CD8-positive, alpha-beta T cell (primary cell): ENCODE measurements at regions of chr17 and their contacts with region 1.

Region 1: DNA sequence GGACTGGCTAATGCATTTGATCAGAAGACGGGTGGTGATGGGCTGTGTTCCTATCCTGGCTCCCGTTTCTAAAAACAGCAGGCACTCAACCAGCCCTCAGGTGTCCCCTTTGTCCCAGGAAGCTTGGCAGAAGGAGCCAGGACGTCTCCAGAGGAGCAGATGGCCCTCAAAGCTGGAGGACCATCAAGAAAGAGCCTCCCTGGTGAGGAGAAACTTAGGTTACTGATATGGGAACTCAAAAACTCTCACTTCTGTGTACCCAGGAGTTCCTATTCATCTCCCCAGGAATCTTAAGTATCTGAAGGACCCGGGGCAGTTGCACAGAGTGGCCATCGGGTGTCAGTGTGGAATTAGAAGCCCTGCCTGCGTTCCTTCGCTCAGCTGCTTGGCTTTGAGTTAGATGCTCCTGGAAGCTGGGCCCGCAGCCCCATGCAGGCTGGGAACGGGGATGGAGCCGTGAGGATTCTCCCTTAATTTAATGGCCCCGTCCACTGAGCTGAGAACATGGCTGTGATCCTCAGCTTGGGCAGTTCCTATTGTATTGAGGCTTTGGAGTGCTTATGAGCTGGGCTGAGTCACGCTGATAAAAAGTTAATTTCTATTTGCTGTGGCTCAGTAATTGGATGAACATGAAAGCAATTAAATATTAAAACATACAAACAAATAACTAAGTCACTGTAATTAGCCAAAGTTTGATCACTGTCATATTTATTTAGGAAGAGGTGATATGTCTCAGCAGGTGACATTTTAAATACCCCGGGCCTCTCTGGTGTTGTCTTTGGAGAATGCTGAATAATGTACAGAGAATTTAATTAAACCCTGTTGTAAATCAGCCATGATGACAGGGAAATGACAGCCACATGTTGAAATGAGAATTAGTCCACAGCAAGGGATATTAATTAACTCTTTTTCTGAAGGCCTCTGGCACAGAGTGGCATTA is 402.1 kb downstream of the SEC14L1 start:
- DNase-seq: peak; percentile 32 to 78 (median 63)
- ATAC-seq: peak; percentile 83
- H3K4me3 ChIP-seq: no peak overlapping the region
- H3K4me3 Mint-ChIP-seq: no peak overlapping the region
- H3K27ac ChIP-seq: no peak overlapping the region
- H3K27ac Mint-ChIP-seq: no peak overlapping the region
- H3K4me1 ChIP-seq: no peaks in the 10 kb centered on the region
- H3K4me1 Mint-ChIP-seq: no peaks in the 10 kb centered on the region
- H3K27me3 ChIP-seq: no peaks in the 10 kb centered on the region
- H3K27me3 Mint-ChIP-seq: peaks cover 3% of the 10 kb centered on the region
- CTCF ChIP-seq: peak; percentile 84

Region 2: DNA sequence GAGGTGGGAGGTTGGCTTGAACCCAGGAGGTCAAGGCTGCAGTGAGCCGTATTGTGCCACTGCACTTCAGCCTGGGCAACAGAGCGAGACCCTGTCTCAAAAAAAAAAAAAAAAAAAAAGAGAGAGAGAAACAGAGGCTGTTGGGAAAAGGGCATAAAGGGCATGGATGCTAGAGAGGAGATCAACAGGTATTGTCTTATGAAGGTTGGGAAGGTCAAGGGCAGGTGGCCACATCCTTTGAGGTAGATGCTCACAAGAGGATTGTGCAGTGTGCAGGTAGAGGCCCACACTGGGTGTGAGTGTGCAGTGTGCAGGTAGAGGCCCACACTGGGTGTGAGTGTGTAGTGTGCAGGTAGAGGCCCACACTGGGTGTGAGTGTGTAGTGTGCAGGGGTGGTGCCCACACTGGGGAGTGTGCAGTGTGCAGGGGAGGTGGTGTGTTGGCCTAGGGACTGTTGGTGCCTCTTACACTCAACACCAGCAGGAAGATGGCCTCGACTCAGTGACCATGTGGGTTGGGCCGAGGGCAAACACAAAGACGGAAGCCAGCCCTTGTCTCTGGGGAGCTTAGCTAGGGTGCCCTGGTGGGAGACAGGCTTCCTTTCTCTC is 10.7 kb after region 1 on chr17:
- CTCF ChIA-PET with region 1: interaction called, 13 read pairs
- POLR2A ChIA-PET with region 1: no interaction called
- intact Hi-C with region 1: no loop called
- DNase-seq: no peak
- ATAC-seq: no peak
- H3K4me3 ChIP-seq: no peak overlapping the region
- H3K4me3 Mint-ChIP-seq: no peak overlapping the region
- H3K27ac ChIP-seq: no peak overlapping the region
- H3K27ac Mint-ChIP-seq: no peak overlapping the region
- H3K4me1 ChIP-seq: no peaks in the 10 kb centered on the region
- H3K4me1 Mint-ChIP-seq: no peaks in the 10 kb centered on the region
- H3K27me3 ChIP-seq: peaks cover 0 to 2% of the 10 kb centered on the region in 2 experiments
- H3K27me3 Mint-ChIP-seq: no peaks in the 10 kb centered on the region
- CTCF ChIP-seq: no peak

Region 3: GRCh38 chr17:77724876-77725615 is 182.2 kb after region 1 on chr17:
- CTCF ChIA-PET with region 1: no interaction called
- POLR2A ChIA-PET with region 1: no interaction called
- intact Hi-C with region 1: loop called in 1 of 2 experiments (anchors 5 kb)
- DNase-seq: peak in 1 of 9 experiments; percentile 29
- ATAC-seq: no peak
- H3K4me3 ChIP-seq: no peak overlapping the region
- H3K4me3 Mint-ChIP-seq: no peak overlapping the region
- H3K27ac ChIP-seq: no peak overlapping the region
- H3K27ac Mint-ChIP-seq: no peak overlapping the region
- H3K4me1 ChIP-seq: no peaks in the 10 kb centered on the region
- H3K4me1 Mint-ChIP-seq: peaks cover 3% of the 10 kb centered on the region
- H3K27me3 ChIP-seq: no peaks in the 10 kb centered on the region
- H3K27me3 Mint-ChIP-seq: peaks cover 3% of the 10 kb centered on the region
- CTCF ChIP-seq: no peak

Region 4: DNA sequence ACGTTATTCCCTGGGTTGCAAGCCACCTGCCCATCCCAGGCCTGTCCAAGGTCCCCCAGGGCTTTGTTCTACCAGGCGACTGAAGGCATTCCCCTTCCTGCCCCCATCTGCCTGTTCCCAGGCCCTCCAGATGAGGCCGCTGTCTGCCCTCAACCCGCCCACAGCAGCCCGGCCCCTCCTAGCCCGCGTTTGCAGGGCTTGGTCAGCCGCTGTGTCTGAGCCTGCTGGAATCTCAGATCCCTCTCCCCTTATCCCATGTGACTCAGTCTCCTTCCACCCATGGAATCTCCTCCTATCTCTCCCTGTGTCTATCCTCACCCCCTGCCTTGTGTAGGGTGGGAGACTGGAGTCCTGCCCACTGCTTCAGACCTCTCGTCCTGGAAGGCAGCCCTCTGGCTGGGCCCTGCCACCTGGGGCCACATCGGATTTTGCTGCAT is 229.7 kb after region 1 on chr17:
- CTCF ChIA-PET with region 1: interaction called, 10 read pairs
- POLR2A ChIA-PET with region 1: no interaction called
- intact Hi-C with region 1: loop called in 1 of 2 experiments (anchors 10 kb)
- DNase-seq: peak; percentile 46 to 82 (median 67)
- ATAC-seq: peak; percentile 95
- H3K4me3 ChIP-seq: no peak overlapping the region
- H3K4me3 Mint-ChIP-seq: no peak overlapping the region
- H3K27ac ChIP-seq: no peak overlapping the region
- H3K27ac Mint-ChIP-seq: peak overlapping the region; percentile 73
- H3K4me1 ChIP-seq: peaks cover 7% of the 10 kb centered on the region
- H3K4me1 Mint-ChIP-seq: peaks cover 13% of the 10 kb centered on the region
- H3K27me3 ChIP-seq: no peaks in the 10 kb centered on the region
- H3K27me3 Mint-ChIP-seq: no peaks in the 10 kb centered on the region
- CTCF ChIP-seq: peak; percentile 74

Region 5: DNA sequence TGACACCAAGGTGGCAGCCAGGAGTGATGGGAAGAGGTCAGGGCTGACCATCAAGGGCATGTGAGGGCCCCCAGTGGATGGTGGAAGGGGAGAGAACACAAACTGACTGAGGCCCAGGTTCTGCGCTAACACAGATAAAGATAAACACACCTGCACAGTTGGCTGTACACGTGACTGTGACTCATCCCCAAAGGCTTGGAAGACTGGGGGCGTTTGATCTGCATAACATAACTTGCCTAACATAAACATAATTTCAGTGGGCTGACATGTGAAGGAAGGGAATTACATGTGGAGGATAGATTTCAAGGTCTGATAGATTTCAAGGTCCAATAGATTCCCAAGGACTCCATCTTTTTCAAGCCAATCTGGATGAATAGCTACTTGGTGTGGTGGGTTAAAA is 314.8 kb after region 1 on chr17:
- CTCF ChIA-PET with region 1: no interaction called
- POLR2A ChIA-PET with region 1: no interaction called
- intact Hi-C with region 1: no loop called
- DNase-seq: peak in 4 of 9 experiments; percentile 20 to 64 (median 44)
- ATAC-seq: peak; percentile 69
- H3K4me3 ChIP-seq: no peak overlapping the region
- H3K4me3 Mint-ChIP-seq: no peak overlapping the region
- H3K27ac ChIP-seq: no peak overlapping the region
- H3K27ac Mint-ChIP-seq: no peak overlapping the region
- H3K4me1 ChIP-seq: peaks cover 12% of the 10 kb centered on the region
- H3K4me1 Mint-ChIP-seq: peaks cover 28% of the 10 kb centered on the region
- H3K27me3 ChIP-seq: no peaks in the 10 kb centered on the region
- H3K27me3 Mint-ChIP-seq: no peaks in the 10 kb centered on the region
- CTCF ChIP-seq: no peak

Region 6: GRCh38 chr17:78019367-78019975 is 476.6 kb after region 1 on chr17:
- CTCF ChIA-PET with region 1: interaction called, 74 read pairs
- POLR2A ChIA-PET with region 1: no interaction called
- intact Hi-C with region 1: loop called in 1 of 2 experiments (anchors 1 kb)
- DNase-seq: peak in 2 of 9 experiments; percentile 43 to 56
- ATAC-seq: peak; percentile 40
- H3K4me3 ChIP-seq: no peak overlapping the region
- H3K4me3 Mint-ChIP-seq: no peak overlapping the region
- H3K27ac ChIP-seq: peak overlapping the region in 1 of 2 experiments; percentile 14
- H3K27ac Mint-ChIP-seq: peak overlapping the region; percentile 52
- H3K4me1 ChIP-seq: peaks cover 12% of the 10 kb centered on the region
- H3K4me1 Mint-ChIP-seq: peaks cover 33% of the 10 kb centered on the region
- H3K27me3 ChIP-seq: no peaks in the 10 kb centered on the region
- H3K27me3 Mint-ChIP-seq: no peaks in the 10 kb centered on the region
- CTCF ChIP-seq: peak; percentile 64